ENCODE measurements at regions of chr18 and their contacts with region 1.

Region 1: DNA sequence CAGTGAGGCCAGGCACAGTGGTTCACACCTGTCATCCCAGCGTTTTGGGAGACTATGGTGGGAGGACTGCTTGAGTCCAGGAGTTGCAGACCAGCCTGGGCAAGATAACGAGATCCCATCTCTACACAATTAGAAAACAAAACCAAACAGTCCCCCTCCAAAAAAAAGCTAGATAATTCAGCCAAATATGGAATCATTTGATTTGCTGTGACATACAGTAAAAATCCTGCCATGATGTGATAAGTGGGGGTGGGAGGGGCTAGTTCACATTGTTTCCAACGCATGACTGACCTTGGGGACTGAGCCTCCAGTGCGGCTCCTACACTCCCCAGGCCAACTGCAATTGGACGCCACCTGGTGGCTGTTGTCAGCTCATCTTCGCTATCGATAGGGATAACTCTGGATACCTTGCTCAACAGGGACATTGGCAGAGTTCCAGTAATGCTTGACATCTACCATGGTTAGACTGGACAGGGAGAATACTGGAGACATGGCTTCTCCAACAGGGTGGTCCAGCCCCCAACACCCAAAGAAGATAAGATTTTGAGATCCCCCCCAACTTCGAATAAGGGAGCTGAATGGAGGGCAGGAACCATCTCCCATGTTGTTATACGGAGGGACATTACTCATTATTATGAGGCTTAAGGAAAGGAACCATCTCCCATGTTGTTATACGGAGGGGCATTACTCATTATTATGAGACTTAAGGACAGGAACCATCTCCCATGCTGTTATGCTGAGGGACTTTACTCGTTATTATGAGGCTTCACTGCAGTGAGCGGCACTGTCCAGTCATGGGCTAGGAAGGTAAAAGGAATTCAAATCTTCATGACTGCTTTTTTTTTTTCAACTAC is 135.9 kb downstream of the TGIF1 start:
- DNase-seq: peak; percentile 90
- H3K4me3 Mint-ChIP-seq: no peak overlapping the region
- H3K27ac Mint-ChIP-seq: peak overlapping the region; percentile 84
- H3K4me1 Mint-ChIP-seq: peaks cover 36% of the 10 kb centered on the region
- H3K27me3 Mint-ChIP-seq: no peaks in the 10 kb centered on the region

Region 2: DNA sequence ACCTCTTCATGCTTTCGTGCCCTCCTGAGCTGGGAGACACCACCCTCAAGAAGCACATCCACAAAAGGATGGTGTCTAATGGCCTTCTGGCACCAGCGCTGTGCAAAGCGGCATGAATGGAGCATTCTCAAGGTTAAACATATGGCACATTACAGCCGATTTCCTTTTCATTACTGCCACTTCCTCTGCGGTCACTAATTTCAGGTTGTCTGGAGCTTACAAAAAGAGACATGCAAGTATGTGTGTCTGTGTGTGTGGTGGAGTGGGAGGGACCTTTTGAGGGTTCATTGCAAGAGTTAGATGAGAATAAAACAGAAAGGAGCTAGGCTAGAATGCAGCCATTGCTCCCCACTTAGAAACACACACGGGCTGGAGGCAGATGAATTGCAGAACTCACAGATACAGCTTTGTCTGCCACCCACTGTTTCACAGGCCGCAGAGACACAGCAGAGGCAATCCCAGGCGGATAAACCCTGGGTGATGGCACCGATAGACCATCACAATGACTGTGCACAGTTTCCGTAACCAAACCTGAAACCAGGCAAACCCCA is 59.9 kb before region 1 on chr18:
- intact Hi-C with region 1: loop called (anchors 5 kb)
- DNase-seq: peak; percentile 79
- H3K4me3 Mint-ChIP-seq: peak overlapping the region; percentile 19
- H3K27ac Mint-ChIP-seq: peak overlapping the region; percentile 1
- H3K4me1 Mint-ChIP-seq: peaks cover 13% of the 10 kb centered on the region
- H3K27me3 Mint-ChIP-seq: peaks cover 1% of the 10 kb centered on the region

Region 3: DNA sequence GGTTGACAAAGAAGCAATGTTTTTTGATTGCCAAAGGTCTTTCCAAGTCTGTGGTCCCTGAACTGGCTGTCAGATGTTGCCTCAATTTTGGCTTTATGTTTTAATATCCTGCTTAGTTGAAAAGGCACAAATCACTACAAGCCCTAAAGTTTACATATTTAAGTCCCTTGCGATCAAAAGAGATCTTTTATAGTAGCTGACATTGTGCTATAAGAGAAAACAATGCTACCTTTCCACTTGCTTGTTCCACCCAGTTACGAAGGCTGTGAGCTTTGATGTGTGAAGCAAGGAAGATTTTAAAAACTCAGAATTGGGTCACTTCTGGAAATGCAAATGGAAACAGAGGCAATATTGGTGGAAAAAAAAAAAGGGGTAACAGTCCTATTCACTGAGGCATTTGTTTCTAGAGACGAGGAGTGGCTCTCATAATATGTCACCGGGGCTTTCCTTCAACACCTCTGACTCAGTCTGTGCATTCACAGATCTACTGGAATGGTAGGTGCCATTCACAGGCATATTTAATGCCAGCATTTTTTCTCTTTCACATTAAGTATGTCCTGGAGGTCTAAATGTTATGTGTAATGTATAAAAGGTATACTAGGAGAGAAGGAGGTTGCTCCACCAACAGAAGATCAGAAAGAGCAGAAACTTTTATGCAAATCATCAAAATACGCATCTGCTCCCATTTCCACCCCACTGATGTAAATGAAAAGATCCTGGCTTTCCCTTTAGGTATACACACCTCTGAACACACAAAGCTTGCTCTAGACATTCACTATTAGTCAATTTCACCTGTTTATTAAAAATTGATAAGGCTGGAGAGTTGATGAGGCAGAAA is 44.1 kb before region 1 on chr18:
- intact Hi-C with region 1: loop called (anchors 1 kb)
- DNase-seq: no peak
- H3K4me3 Mint-ChIP-seq: no peak overlapping the region
- H3K27ac Mint-ChIP-seq: peak overlapping the region; percentile 75
- H3K4me1 Mint-ChIP-seq: peaks cover 14% of the 10 kb centered on the region
- H3K27me3 Mint-ChIP-seq: peaks cover 6% of the 10 kb centered on the region